ENCODE measurements at regions of chr22 and their contacts with region 1.

Region 1: GRCh38 chr22:21766691-21767462 is 31.3 kb upstream of the YPEL1 start:
- DNase-seq: peak; percentile 72
- H3K4me3 Mint-ChIP-seq: peak overlapping the region; percentile 55
- H3K27ac Mint-ChIP-seq: peak overlapping the region; percentile 73
- H3K4me1 Mint-ChIP-seq: peaks cover 79% of the 10 kb centered on the region
- H3K27me3 Mint-ChIP-seq: no peaks in the 10 kb centered on the region

Region 2: DNA sequence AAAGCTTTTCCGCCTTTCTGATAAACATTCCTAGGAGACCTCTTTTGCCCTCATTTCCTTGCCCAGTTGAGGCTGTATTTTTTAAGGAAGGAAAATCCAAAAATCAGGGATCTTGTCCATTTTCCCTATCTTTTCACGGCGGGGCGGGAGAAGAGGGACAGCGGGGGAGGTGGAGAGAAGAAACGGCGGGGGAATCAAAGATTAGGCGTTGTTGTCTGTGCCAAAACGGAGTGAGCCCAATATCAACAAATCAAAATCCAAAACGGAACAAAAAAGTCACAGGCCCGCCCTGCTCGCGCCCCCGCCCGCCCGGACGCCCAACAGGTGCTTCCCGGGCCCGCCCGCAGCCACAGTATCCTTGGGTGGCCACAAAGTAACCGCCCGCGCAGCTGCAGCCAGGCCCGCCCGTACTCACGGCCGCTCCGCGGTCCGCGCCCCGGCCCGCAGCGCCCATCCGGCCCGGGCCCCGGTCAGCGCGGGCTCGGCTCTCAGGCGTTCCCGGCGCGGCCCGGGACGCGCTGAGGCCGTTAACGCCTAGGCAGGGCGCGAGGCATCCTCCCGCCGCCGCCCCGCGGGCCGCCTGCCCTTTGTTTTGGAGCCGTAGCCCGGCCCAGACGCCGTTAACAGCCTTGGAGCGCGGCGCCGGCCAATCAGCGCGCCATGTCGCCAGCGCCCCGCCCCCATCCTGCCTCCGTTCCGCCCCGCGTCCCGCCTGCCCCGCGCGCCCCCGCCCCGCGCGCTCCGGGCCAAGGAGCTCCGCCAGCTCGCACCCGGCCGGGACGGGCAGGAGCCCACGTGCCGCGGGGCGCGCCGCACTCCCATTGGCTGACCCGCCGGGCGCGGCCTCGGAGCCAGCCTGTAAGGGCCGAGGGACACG is 31.4 kb before region 1 on chr22 and contains the start of gene YPEL1:
- intact Hi-C with region 1: loop called (anchors 1 kb)
- DNase-seq: peak; percentile 96
- H3K4me3 Mint-ChIP-seq: peak within 1 kb of the TSS; percentile 85
- H3K27ac Mint-ChIP-seq: peak within 1 kb of the TSS; percentile 85
- H3K4me1 Mint-ChIP-seq: peaks cover 32% of the 10 kb centered on the region
- H3K27me3 Mint-ChIP-seq: peaks cover 19% of the 10 kb centered on the region
- total RNA-seq, gene YPEL1: 0.34 and 0.71 TPM in 2 replicates

Region 3: GRCh38 chr22:21816787-21817496 is 50.1 kb after region 1 on chr22:
- intact Hi-C with region 1: loop called (anchors 1 kb)
- DNase-seq: peak; percentile 42
- H3K4me3 Mint-ChIP-seq: peak overlapping the region; percentile 65
- H3K27ac Mint-ChIP-seq: peak overlapping the region; percentile 96
- H3K4me1 Mint-ChIP-seq: peaks cover 47% of the 10 kb centered on the region
- H3K27me3 Mint-ChIP-seq: no peaks in the 10 kb centered on the region

Region 4: DNA sequence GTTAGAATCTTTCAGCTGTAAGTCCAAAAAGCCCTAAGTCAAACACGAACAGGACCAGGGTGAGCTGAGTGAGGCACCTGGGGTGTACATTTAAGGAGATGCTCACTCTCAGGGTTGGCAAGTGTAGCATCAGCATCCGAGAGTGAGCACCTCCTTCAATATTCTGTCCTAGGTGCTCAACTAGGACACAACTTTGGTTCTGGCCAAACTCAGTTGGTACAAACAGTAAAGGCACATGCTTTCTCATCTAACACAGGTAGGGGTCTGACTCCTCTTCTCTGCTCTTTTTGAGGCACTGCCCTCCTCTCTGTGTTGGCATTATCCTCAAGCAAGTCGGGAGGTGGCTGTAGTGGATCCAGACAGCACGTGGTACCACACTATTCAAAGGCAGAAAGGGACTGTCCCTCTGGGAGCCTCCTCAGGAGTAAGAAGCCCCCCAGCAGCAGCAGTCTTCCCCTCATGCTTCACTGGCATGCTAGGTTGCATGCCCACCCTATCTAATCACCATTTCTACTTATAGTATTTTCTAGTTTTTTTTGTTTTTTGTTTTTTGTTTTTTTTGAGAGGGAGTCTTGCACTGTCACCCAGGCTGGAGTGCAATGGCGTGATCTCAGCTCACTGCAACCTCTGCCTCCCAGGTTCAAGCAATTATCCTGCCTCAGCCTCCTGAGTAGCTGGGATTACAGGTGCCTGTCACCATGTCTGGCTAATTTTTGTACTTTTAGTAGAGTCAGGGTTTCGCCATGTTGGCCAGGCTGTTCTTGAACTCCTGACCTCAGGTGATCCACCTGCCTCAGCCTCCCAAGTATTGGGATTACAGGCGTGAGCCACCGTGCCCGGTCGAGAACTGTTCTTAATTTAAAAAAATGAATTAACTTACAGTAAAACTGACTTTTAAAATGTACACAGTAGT is 115.2 kb after region 1 on chr22:
- intact Hi-C with region 1: no loop called
- DNase-seq: no peak
- H3K4me3 Mint-ChIP-seq: no peak overlapping the region
- H3K27ac Mint-ChIP-seq: no peak overlapping the region
- H3K4me1 Mint-ChIP-seq: peaks cover under 1% of the 10 kb centered on the region
- H3K27me3 Mint-ChIP-seq: peaks cover 3% of the 10 kb centered on the region

Region 5: GRCh38 chr22:22207845-22208564 is 441.1 kb after region 1 on chr22:
- intact Hi-C with region 1: loop called (anchors 1 kb)
- DNase-seq: peak; percentile 75
- H3K4me3 Mint-ChIP-seq: no peak overlapping the region
- H3K27ac Mint-ChIP-seq: peak overlapping the region; percentile 84
- H3K4me1 Mint-ChIP-seq: peaks cover 41% of the 10 kb centered on the region
- H3K27me3 Mint-ChIP-seq: peaks cover 4% of the 10 kb centered on the region

Measured in activated T-helper 1 cell treated with anti-CD3 and anti-CD28 coated beads, Interleukin-12 subunit alpha, Interleukin-12 subunit beta, Interleukin-2, Interleukin-4 antibody, amounts not matched to agents 30 ng/mL and 10 ng/mL and 1 ng/mL, durations not matched to agents 14 hours and 24 hours and 36 hours (primary cell).